Activated naive CD4-positive, alpha-beta T cell treated with anti-CD3 and anti-CD28 coated beads for 36 hours (primary cell): ENCODE measurements at regions of chr12 and their contacts with region 1.

Region 1: GRCh38 chr12:3905664-3906063 is 32.5 kb upstream of the PARP11 start:
- DNase-seq: peak; percentile 27
- H3K4me3 Mint-ChIP-seq: peak overlapping the region; percentile 61
- H3K27ac Mint-ChIP-seq: peak overlapping the region; percentile 76
- H3K4me1 Mint-ChIP-seq: peaks cover 49% of the 10 kb centered on the region
- H3K27me3 Mint-ChIP-seq: no peaks in the 10 kb centered on the region

Region 2: GRCh38 chr12:3920351-3921150 is 14.9 kb after region 1 on chr12:
- CTCF ChIA-PET with region 1: no interaction called
- intact Hi-C with region 1: no loop called
- DNase-seq: no peak
- H3K4me3 Mint-ChIP-seq: no peak overlapping the region
- H3K27ac Mint-ChIP-seq: no peak overlapping the region
- H3K4me1 Mint-ChIP-seq: peaks cover 16% of the 10 kb centered on the region
- H3K27me3 Mint-ChIP-seq: no peaks in the 10 kb centered on the region

Region 3: GRCh38 chr12:3931746-3932145 is 26.1 kb after region 1 on chr12:
- CTCF ChIA-PET with region 1: interaction called, 5 read pairs
- intact Hi-C with region 1: loop called (anchors 2 kb)
- DNase-seq: no peak
- H3K4me3 Mint-ChIP-seq: no peak overlapping the region
- H3K27ac Mint-ChIP-seq: no peak overlapping the region
- H3K4me1 Mint-ChIP-seq: peaks cover 55% of the 10 kb centered on the region
- H3K27me3 Mint-ChIP-seq: no peaks in the 10 kb centered on the region

Region 4: GRCh38 chr12:4221258-4221620 is 315.6 kb after region 1 on chr12:
- CTCF ChIA-PET with region 1: no interaction called
- intact Hi-C with region 1: no loop called
- DNase-seq: no peak
- H3K4me3 Mint-ChIP-seq: no peak overlapping the region
- H3K27ac Mint-ChIP-seq: no peak overlapping the region
- H3K4me1 Mint-ChIP-seq: peaks cover 20% of the 10 kb centered on the region
- H3K27me3 Mint-ChIP-seq: peaks cover 3% of the 10 kb centered on the region